Sigmoid colon (tissue), 7 donors: ENCODE measurements at regions of chr9 and their contacts with region 1.

Region 1: GRCh38 chr9:111483862-111484571 is at the start of gene ECPAS:
- DNase-seq: peak; percentile 88
- H3K4me3 ChIP-seq: peak within 1 kb of the TSS; percentile 68 to 98 (median 90)
- H3K27ac ChIP-seq: peak within 1 kb of the TSS; percentile 98 to 100 (median 99)
- H3K4me1 ChIP-seq: peaks cover 0 to 38% (median 20%) of the 10 kb centered on the region in 4 donors
- H3K27me3 ChIP-seq: no peaks in the 10 kb centered on the region
- CTCF ChIP-seq: no peak
- EP300 ChIP-seq: no peak
- POLR2A ChIP-seq: peak in 1 of 2 donors; percentile 9
- total RNA-seq, gene ECPAS: 61.4 to 92.8 (median 75.0) TPM

Region 2: DNA sequence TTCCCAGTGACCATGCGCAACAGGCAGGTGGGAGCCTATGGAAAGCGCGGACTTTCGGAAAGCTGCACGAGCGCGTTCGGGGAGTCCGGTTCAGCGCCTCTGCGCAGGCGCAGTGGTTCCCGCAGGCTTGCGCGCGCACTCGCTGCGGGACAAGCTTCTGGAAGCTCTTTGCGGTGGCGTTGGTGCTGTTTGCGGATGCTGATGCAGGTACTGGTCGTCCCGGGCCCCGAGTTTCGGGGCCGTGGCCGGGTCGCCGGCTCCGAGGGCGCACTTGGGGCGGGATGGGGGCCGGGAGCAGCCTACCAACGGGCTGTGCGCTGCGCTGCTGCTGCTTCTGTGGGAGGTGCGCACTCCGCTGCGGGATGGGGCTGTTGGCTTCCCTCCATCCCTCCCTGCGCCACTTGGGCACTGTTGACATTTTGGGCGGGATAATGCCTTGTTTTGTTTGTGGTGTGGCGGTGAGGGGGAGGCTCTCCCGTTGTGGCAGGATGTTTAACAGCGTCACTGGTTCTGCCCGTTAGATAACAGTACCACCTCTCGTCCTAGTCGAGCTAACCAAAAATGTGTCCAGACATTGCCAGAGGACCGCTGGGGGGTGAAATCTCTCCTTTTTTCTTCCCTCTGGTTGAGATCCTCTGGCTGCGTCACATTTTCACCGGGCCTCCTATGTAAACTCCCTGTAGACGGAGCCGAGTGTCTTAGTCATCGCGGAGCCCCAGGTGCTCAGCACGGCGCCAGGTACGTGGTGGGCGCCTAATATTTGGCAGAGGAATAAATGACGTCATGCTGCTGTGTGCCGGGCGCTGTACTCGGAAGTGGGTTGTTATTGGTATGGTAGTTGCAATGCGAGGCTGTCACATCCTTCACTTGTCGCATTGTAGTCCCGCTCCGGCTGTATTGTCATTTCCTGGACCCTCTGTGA is 41.3 kb after region 1 on chr9 and contains the start of gene ZNF483:
- intact Hi-C with region 1: loop called (anchors 1 kb)
- DNase-seq: peak; percentile 91
- H3K4me3 ChIP-seq: peak within 1 kb of the TSS; percentile 59 to 91 (median 85)
- H3K27ac ChIP-seq: peak within 1 kb of the TSS; percentile 66 to 81 (median 73)
- H3K4me1 ChIP-seq: peaks cover 0 to 13% (median 6%) of the 10 kb centered on the region in 4 donors
- H3K27me3 ChIP-seq: no peaks in the 10 kb centered on the region
- CTCF ChIP-seq: no peak
- EP300 ChIP-seq: no peak
- POLR2A ChIP-seq: peak; percentile 23 to 30
- total RNA-seq, gene ZNF483: 19.7 to 22.7 (median 21.3) TPM

Region 3: DNA sequence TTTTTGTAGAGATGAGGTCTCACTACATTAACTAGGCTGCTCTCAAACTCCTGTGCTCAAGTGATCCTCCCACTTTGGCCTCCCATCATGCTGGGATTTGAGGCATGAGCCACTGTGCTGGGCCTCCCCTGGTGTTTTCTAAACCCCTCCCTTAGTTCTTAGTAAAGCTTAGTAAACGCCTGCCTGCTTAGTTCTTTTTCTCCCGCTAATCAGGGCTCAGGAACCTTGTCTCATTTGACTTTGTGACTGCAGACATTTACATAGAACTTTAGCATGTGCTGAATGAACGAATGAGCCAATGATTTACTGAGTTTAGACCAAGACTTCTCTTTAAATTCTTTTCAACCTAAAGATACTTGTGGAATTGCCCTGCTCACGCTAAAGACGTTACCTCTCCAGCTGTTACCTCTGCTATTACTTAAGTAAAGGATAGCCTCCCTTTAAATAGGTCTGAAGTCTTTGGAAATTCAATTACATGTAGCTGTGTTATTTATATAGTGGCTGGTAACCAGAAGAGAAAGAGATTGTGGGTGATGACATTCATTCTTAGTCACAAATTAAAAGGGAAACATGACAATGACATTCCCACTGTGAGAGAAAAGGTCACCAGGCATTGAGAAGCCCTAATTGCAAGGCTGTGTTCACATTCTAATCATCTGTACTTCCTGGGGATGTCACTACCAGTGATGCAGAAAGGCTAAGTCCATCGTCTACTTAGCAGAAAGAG is 709.7 kb after region 1 on chr9:
- intact Hi-C with region 1: no loop called
- DNase-seq: no peak
- H3K4me3 ChIP-seq: no peak overlapping the region
- H3K27ac ChIP-seq: no peak overlapping the region
- H3K4me1 ChIP-seq: no peaks in the 10 kb centered on the region
- H3K27me3 ChIP-seq: no peaks in the 10 kb centered on the region
- CTCF ChIP-seq: no peak
- EP300 ChIP-seq: no peak
- POLR2A ChIP-seq: no peak

Region 4: GRCh38 chr9:112333639-112334431 is 849.8 kb after region 1 on chr9:
- intact Hi-C with region 1: loop called (anchors 10 kb)
- DNase-seq: peak; percentile 97
- H3K4me3 ChIP-seq: peak overlapping the region; percentile 59 to 99 (median 79)
- H3K27ac ChIP-seq: peak overlapping the region; percentile 94 to 99 (median 98)
- H3K4me1 ChIP-seq: peaks cover 2 to 15% (median 11%) of the 10 kb centered on the region in 4 donors
- H3K27me3 ChIP-seq: no peaks in the 10 kb centered on the region
- CTCF ChIP-seq: peak; percentile 25 to 69 (median 43)
- EP300 ChIP-seq: no peak
- POLR2A ChIP-seq: no peak